ENCODE measurements at regions of chr5 and their contacts with region 1.

Region 1: GRCh38 chr5:25345240-25345771 is 700.5 kb upstream of the CDH10 start:
- H3K4me3 ChIP-seq: no peak overlapping the region
- H3K27ac ChIP-seq: no peak overlapping the region
- H3K4me1 ChIP-seq: no peaks in the 10 kb centered on the region
- CTCF ChIP-seq: no peak

Region 2: DNA sequence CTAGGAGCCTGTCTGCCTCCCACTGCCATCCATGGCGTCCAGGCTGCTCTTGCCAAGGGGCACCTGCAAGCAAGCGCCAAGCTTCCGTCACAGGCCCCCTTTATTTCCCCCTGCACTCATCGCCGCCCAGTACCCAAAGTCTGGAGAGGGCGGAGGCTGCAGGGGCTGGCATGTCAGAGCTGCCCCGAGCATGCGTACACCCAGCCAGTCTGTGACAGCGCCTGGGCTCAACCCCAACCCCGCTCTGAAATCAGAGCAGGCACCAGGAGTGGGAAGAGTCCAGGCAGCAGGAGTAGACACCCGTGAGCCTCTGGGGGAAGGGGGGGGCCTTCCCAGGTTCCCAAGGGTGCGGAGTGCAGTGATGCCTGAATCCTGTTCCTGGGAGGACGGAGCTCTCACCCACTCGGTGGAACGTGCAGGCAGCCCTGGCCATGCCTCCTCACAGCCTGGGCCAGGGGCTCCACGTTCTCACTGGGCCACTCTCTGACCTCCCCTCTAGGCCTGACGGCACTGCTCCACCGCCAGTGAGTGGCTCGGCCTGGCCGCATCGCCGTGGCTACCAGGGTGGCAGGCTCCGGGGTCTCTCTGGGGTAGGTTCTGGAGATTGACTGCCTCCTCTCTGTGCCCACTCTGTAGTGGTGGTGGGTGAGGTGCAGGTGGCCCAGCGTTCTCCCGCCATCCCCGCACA is 1224.1 kb after region 1 on chr5:
- CTCF ChIA-PET with region 1: interaction called, 10 read pairs
- POLR2A ChIA-PET with region 1: no interaction called
- H3K4me3 ChIP-seq: no peak overlapping the region
- H3K27ac ChIP-seq: no peak overlapping the region
- H3K4me1 ChIP-seq: no peaks in the 10 kb centered on the region
- CTCF ChIP-seq: no peak